Activated B cell treated with CpG ODN at 0.5 μM for 24 hours (primary cell): ENCODE measurements at regions of chr9 and their contacts with region 1.

Region 1: GRCh38 chr9:95875305-95876137 is at the start of gene ERCC6L2:
- DNase-seq: peak; percentile 89
- ATAC-seq: peak; percentile 88
- H3K4me3 Mint-ChIP-seq: no peak within 1 kb of the TSS
- H3K27ac Mint-ChIP-seq: no peak within 1 kb of the TSS
- H3K4me1 Mint-ChIP-seq: peaks cover 20% of the 10 kb centered on the region
- H3K27me3 Mint-ChIP-seq: no peaks in the 10 kb centered on the region
- CTCF ChIP-seq: no peak
- total RNA-seq, gene ERCC6L2: 43.2 and 52.3 TPM in 2 replicates

Region 2: GRCh38 chr9:94259077-94259892 is 1616.2 kb before region 1 on chr9 and contains the start of gene ZNF169:
- CTCF ChIA-PET with region 1: no interaction called
- POLR2A ChIA-PET with region 1: no interaction called
- intact Hi-C with region 1: loop called (anchors 5 kb)
- DNase-seq: peak; percentile 78
- ATAC-seq: peak; percentile 100
- H3K4me3 Mint-ChIP-seq: peak within 1 kb of the TSS; percentile 100
- H3K27ac Mint-ChIP-seq: peak within 1 kb of the TSS; percentile 95
- H3K4me1 Mint-ChIP-seq: peaks cover 36% of the 10 kb centered on the region
- H3K27me3 Mint-ChIP-seq: peaks cover 9% of the 10 kb centered on the region
- CTCF ChIP-seq: no peak
- total RNA-seq, gene ZNF169: 13.6 and 18.3 TPM in 2 replicates

Region 3: GRCh38 chr9:95127249-95128176 is 748.0 kb before region 1 on chr9:
- CTCF ChIA-PET with region 1: no interaction called
- POLR2A ChIA-PET with region 1: no interaction called
- intact Hi-C with region 1: no loop called
- DNase-seq: peak; percentile 48
- ATAC-seq: peak; percentile 86
- H3K4me3 Mint-ChIP-seq: no peak overlapping the region
- H3K27ac Mint-ChIP-seq: no peak overlapping the region
- H3K4me1 Mint-ChIP-seq: peaks cover 4% of the 10 kb centered on the region
- H3K27me3 Mint-ChIP-seq: no peaks in the 10 kb centered on the region
- CTCF ChIP-seq: peak; percentile 21

Region 4: DNA sequence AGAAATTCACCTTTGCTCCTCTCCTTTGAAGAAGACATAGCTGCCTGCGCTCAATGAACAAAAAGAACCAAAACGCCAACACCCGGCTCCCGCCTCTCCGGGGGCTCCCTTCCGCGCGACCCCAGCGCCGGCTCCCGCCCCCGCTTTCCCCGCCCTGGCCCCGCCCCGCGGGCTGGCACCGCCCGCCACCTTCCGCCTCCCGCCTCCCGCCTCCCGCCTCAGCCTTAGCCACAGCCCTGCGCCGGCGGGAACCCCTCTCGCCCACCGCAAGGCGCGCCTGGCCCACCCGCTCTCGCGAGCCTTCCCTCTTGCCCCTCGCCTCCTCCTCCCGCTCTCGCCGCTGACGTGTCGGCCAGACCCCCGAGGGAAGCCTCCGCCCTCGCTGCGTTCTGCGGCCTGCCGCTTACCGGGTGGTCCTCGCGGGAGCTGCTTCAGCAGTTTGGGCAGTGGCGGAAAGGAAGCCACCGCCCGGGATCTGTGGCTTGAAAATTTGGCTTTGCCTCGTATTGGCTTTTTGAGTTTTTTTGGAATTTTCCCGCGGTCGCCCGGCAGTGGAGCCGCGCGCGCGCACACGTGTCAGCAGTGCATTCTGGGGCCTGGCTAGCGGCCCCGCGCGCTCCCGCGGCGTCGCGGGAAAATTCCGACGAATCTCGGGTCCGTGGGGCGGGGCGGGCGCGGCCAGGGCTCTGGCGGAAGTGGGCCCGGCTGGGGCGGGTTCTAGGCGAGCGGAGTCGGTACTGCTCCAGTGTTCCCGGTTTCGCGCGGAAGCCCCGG is 558.2 kb before region 1 on chr9 and contains the start of gene FANCC:
- CTCF ChIA-PET with region 1: no interaction called
- POLR2A ChIA-PET with region 1: interaction called, 3 read pairs
- intact Hi-C with region 1: loop called (anchors 2 kb)
- DNase-seq: peak; percentile 89
- ATAC-seq: peak; percentile 84
- H3K4me3 Mint-ChIP-seq: peak within 1 kb of the TSS; percentile 92
- H3K27ac Mint-ChIP-seq: peak within 1 kb of the TSS; percentile 91
- H3K4me1 Mint-ChIP-seq: peaks cover 15% of the 10 kb centered on the region
- H3K27me3 Mint-ChIP-seq: peaks cover 10% of the 10 kb centered on the region
- CTCF ChIP-seq: no peak
- total RNA-seq, gene FANCC: 10.4 and 11.4 TPM in 2 replicates

Region 5: DNA sequence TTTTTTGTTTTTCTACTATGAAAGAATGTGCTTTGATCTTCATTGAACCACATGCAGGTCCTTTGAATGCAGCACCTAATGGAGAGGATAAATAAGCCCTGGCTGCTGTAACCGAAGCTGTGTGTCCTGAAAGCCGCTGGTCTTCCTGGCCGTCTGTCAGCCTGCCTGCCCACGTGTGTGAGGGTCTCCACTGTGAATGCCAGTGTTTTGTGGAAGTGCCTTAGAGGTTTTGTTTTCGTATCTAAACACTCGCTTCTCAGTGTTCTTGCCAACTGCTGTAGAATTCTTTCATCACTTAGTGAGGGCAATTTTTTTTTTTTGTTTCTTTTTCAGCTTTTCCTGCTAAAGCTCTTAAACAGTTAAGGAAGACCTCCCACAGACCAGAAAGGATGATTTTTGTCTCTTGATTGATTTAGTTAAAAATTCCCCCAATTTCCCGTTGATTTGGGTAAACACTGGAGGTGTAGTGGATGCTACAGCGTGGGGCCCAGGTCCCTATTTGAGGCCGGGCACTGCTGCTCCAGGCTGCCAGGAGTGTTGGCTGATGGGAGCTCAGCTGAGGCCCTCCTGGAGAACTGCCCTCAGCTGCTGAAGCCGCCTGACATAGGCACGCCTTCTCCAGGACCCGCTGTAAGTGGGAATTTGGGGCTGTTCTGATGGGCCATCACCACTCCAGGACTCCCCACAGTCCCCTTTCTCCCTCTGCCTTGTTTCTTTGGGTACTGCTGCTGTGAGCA is 329.5 kb before region 1 on chr9:
- CTCF ChIA-PET with region 1: no interaction called
- POLR2A ChIA-PET with region 1: no interaction called
- intact Hi-C with region 1: no loop called
- DNase-seq: no peak
- ATAC-seq: no peak
- H3K4me3 Mint-ChIP-seq: no peak overlapping the region
- H3K27ac Mint-ChIP-seq: no peak overlapping the region
- H3K4me1 Mint-ChIP-seq: no peaks in the 10 kb centered on the region
- H3K27me3 Mint-ChIP-seq: peaks cover 40% of the 10 kb centered on the region
- CTCF ChIP-seq: no peak

Region 6: DNA sequence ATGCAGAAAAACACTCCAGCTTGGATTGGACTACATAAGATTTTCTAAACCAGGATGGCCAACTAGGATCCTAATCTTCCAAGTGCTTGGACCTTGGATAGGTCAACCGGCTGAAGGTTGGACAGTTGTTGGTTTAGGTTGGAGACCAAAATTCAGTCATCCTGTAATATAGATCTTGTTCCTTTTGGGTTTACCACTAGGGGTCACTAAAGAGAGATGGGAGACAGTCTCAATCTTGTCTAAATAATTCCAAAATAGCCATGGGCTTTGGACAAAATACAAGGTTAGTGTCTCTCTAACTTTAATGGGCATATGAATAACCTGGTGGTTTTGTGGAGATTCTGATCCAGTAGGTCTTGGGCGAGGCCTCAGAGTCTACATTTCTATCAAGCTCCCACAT is 148.8 kb before region 1 on chr9:
- CTCF ChIA-PET with region 1: no interaction called
- POLR2A ChIA-PET with region 1: no interaction called
- intact Hi-C with region 1: loop called (anchors 10 kb)
- DNase-seq: no peak
- ATAC-seq: no peak
- H3K4me3 Mint-ChIP-seq: no peak overlapping the region
- H3K27ac Mint-ChIP-seq: no peak overlapping the region
- H3K4me1 Mint-ChIP-seq: peaks cover 13% of the 10 kb centered on the region
- H3K27me3 Mint-ChIP-seq: peaks cover 2% of the 10 kb centered on the region
- CTCF ChIP-seq: no peak

Region 7: GRCh38 chr9:95852059-95853032 is 23.2 kb before region 1 on chr9:
- CTCF ChIA-PET with region 1: no interaction called
- POLR2A ChIA-PET with region 1: interaction called, 30 read pairs
- intact Hi-C with region 1: loop called (anchors 1 kb)
- DNase-seq: no peak
- ATAC-seq: peak; percentile 79
- H3K4me3 Mint-ChIP-seq: peak overlapping the region; percentile 29
- H3K27ac Mint-ChIP-seq: peak overlapping the region; percentile 67
- H3K4me1 Mint-ChIP-seq: peaks cover 26% of the 10 kb centered on the region
- H3K27me3 Mint-ChIP-seq: no peaks in the 10 kb centered on the region
- CTCF ChIP-seq: no peak

Region 8: GRCh38 chr9:96654443-96655197 is 779.1 kb after region 1 on chr9:
- CTCF ChIA-PET with region 1: no interaction called
- POLR2A ChIA-PET with region 1: no interaction called
- intact Hi-C with region 1: loop called (anchors 10 kb)
- DNase-seq: peak; percentile 58
- ATAC-seq: peak; percentile 64
- H3K4me3 Mint-ChIP-seq: peak overlapping the region; percentile 88
- H3K27ac Mint-ChIP-seq: peak overlapping the region; percentile 86
- H3K4me1 Mint-ChIP-seq: peaks cover 17% of the 10 kb centered on the region
- H3K27me3 Mint-ChIP-seq: no peaks in the 10 kb centered on the region
- CTCF ChIP-seq: no peak